ENCODE measurements at regions of chr1 and their contacts with region 1.

Region 1: DNA sequence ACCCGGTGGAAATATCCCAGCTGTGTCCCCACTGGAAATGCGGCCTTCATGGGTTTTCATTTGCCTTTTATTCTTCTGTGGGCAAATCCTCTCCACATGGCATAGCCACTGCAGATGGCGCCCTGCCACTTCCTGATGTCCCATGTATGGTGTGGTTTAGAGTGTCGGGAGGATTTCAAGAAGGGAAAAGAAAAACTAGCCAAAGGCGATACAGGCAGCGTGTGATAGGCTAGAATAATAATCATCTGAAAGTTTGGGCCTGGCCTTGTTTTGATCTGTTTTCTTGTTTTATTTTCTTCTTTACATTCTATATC is 123.6 kb downstream of the PEX14 start:
- DNase-seq: no peak
- H3K4me3 ChIP-seq: no peak overlapping the region
- H3K27ac ChIP-seq: peak overlapping the region; percentile 84
- H3K4me1 ChIP-seq: peaks cover 16% of the 10 kb centered on the region
- H3K27me3 ChIP-seq: no peaks in the 10 kb centered on the region
- CTCF ChIP-seq: no peak

Region 2: DNA sequence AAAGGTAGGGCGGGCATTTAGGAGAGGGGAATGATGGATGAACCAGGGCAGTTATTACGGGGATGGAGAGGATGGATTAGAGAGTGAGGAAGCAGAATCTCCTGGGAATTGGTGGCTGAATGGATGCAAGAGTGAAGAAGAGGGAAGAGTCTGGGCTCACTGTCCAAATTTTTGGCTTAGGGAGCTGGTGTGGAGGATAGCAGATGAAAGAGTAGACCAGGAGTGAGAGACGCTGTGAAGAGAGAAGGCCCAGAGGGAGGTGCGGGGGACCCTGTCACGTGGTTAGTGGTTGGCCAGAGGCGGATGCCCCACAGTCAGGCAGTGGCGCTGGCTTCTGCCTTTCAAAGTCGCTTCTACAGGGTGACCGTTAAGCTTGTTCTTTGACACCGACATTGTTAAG is 45.2 kb before region 1 on chr1:
- CTCF ChIA-PET with region 1: no interaction called
- dilution Hi-C with region 1: loop called (anchors 5 kb)
- in situ Hi-C with region 1: no loop called
- intact Hi-C with region 1: no loop called
- DNase-seq: no peak
- H3K4me3 ChIP-seq: no peak overlapping the region
- H3K27ac ChIP-seq: no peak overlapping the region
- H3K4me1 ChIP-seq: peaks cover 8% of the 10 kb centered on the region
- H3K27me3 ChIP-seq: no peaks in the 10 kb centered on the region
- CTCF ChIP-seq: no peak